ENCODE measurements at regions of chr17 and their contacts with region 1.

Region 1: DNA sequence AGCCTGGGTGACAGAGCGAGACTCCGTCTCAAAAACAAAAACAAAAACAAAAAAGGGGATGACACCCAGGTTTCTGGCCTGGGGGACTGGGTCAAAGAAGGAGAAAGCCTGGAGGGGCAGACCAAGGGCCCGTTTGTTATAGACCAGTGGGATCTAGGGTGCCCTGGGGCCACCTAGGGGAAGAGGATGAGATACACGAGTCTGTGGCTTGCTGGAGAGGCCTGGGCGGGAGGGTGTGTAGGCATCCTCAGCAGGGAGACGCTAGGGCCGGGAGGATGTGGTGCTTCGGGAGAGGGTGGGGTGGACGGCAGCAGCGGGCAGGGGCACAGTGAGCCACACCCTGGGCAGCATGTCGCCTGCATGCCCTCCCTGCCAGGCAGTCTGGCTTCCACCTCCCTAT is 17.1 kb upstream of the CRK start:
- DNase-seq: no peak
- H3K4me3 Mint-ChIP-seq: no peak overlapping the region
- H3K27ac Mint-ChIP-seq: no peak overlapping the region
- H3K4me1 Mint-ChIP-seq: peaks cover 12% of the 10 kb centered on the region
- H3K27me3 Mint-ChIP-seq: no peaks in the 10 kb centered on the region

Region 2: DNA sequence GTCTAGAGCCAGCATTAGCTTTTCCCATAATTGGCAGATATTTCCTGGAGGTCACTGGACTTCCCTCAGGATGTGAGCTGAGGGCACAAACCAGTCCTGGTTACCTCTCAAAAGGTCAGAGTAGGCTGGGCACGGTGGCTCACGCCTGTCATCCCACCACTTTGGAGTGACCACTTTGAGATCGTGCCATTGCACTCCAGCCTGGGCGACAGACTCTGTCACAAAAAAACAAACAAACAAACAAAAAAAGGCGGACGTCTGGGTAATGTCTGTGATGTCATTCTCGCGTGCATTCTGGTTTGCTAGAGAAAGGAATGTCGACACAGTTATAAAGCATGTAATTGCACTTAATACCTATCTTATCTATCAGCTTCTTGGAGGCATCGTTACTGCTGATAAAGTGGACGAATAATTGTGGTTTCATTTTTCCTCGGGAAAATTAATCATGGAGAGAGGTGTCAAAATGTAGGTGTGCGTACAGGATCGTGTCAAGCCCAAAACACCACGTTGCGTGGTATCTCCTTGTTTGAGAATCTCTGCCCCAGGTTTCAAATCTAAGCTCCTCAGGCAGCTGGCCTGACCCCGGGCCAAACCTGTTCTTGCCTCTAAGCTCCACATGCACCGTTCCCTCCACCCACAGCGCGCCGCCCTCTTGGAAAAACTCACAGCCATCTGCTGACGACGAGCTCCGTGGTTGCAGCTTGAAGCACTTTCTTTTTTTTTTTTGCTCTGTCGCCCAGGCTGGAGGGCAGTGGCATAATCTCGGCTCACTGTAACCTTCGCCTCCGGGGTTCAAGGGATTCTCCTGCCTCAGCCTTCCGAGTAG is 10.7 kb before region 1 on chr17:
- intact Hi-C with region 1: loop called (anchors 1 kb)
- DNase-seq: no peak
- H3K4me3 Mint-ChIP-seq: peak overlapping the region; percentile 38
- H3K27ac Mint-ChIP-seq: peak overlapping the region; percentile 93
- H3K4me1 Mint-ChIP-seq: peaks cover 17% of the 10 kb centered on the region
- H3K27me3 Mint-ChIP-seq: peaks cover 26% of the 10 kb centered on the region

Region 3: GRCh38 chr17:1546292-1546922 is 73.2 kb after region 1 on chr17:
- intact Hi-C with region 1: no loop called
- DNase-seq: no peak
- H3K4me3 Mint-ChIP-seq: no peak overlapping the region
- H3K27ac Mint-ChIP-seq: no peak overlapping the region
- H3K4me1 Mint-ChIP-seq: peaks cover under 1% of the 10 kb centered on the region
- H3K27me3 Mint-ChIP-seq: no peaks in the 10 kb centered on the region

Measured in activated T-helper 1 cell treated with anti-CD3 and anti-CD28 coated beads, Interleukin-12 subunit alpha, Interleukin-12 subunit beta, Interleukin-2, Interleukin-4 antibody, amounts not matched to agents 30 ng/mL and 10 ng/mL and 1 ng/mL, durations not matched to agents 14 hours and 24 hours and 36 hours (primary cell).